ENCODE measurements at regions of chr5 and their contacts with region 1.

Region 1: DNA sequence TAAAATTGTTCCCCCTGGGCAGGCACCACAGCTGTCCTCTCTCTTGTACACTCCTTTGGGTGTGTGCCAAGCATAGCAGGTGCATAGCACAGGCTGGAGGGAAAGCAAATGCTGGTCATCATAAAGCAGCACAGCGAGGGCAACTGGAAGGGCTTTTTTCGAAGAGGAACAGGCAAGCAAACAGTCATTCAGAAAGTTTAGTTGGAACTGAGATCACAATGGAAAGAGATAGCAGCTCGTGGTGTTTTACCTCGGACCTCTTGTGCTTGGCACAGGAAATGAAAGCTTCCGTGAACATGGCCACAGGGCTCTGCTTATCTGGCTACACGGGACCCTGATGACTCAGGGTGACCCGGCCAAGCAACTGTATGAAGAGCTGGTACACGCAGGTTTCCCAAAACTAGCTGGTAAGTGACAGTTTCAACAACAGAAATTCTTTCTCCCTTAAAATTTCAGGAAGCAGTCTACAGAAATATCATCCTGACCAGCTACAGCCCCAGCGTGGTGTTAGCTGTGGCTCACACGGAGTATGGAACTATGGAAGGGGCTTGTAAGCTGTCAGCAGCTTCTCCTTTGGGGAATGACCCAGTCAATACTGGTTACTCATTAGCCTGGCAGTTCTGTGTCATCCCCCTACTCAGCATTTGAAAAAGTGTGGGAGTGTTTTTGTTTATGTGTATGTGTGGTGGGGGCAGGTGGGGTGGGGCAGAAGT is 48.1 kb downstream of the POC5 start:
- DNase-seq: peak; percentile 83
- H3K4me3 Mint-ChIP-seq: peak overlapping the region; percentile 79
- H3K27ac Mint-ChIP-seq: peak overlapping the region; percentile 95
- H3K4me1 Mint-ChIP-seq: peaks cover 36% of the 10 kb centered on the region
- H3K27me3 Mint-ChIP-seq: no peaks in the 10 kb centered on the region

Region 2: GRCh38 chr5:75236322-75237316 is 432.5 kb before region 1 on chr5 and contains the start of gene ANKRD31:
- intact Hi-C with region 1: loop called (anchors 2 kb)
- DNase-seq: peak; percentile 97
- H3K4me3 Mint-ChIP-seq: peak within 1 kb of the TSS; percentile 96
- H3K27ac Mint-ChIP-seq: peak within 1 kb of the TSS; percentile 93
- H3K4me1 Mint-ChIP-seq: peaks cover 13% of the 10 kb centered on the region
- H3K27me3 Mint-ChIP-seq: no peaks in the 10 kb centered on the region
- total RNA-seq, gene ANKRD31: 0.33 and 0.47 TPM in 2 replicates

Region 3: DNA sequence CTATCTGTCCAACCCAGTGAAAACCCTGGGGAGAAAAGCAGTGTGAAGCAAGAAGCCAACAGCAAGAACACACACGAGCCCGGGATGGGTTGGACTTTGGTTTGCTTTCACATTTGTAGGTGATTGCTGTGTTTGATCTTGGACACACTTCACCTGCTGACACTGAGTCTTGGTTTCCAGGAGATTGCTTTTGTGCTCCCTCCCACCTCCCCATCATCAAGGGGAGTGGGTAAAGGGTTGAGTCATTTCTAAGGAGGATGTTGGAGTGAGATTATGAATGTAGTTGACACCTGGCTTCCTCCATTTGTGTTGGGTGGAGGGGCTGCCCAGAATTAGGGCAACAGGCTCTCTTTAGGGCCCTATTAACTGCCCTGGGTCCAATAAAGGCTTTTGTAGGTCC is 20.4 kb before region 1 on chr5:
- intact Hi-C with region 1: no loop called
- DNase-seq: no peak
- H3K4me3 Mint-ChIP-seq: no peak overlapping the region
- H3K27ac Mint-ChIP-seq: no peak overlapping the region
- H3K4me1 Mint-ChIP-seq: peaks cover 6% of the 10 kb centered on the region
- H3K27me3 Mint-ChIP-seq: no peaks in the 10 kb centered on the region

Region 4: GRCh38 chr5:75681125-75681830 is 12.1 kb after region 1 on chr5:
- intact Hi-C with region 1: loop called (anchors 1 kb)
- DNase-seq: no peak
- H3K4me3 Mint-ChIP-seq: no peak overlapping the region
- H3K27ac Mint-ChIP-seq: no peak overlapping the region
- H3K4me1 Mint-ChIP-seq: peaks cover 8% of the 10 kb centered on the region
- H3K27me3 Mint-ChIP-seq: no peaks in the 10 kb centered on the region

Region 5: GRCh38 chr5:75717082-75717922 is 48.2 kb after region 1 on chr5 and contains the start of gene POC5:
- intact Hi-C with region 1: loop called (anchors 1 kb)
- DNase-seq: peak; percentile 99
- H3K4me3 Mint-ChIP-seq: peak within 1 kb of the TSS; percentile 100
- H3K27ac Mint-ChIP-seq: peak within 1 kb of the TSS; percentile 100
- H3K4me1 Mint-ChIP-seq: peaks cover 29% of the 10 kb centered on the region
- H3K27me3 Mint-ChIP-seq: peaks cover 7% of the 10 kb centered on the region
- total RNA-seq, gene POC5: 20.8 and 21.3 TPM in 2 replicates

Measured in activated CD4-positive, alpha-beta T cell treated with anti-CD3 and anti-CD28 coated beads, Interleukin-2, amount 10 ng/mL, durations not matched to agents 24 days and 14 days (primary cell).